ENCODE measurements at regions of chr10 and their contacts with region 1.

Region 1: GRCh38 chr10:12214763-12215218 is 18.8 kb downstream of the CDC123 start:
- DNase-seq: peak in 1 of 2 experiments; percentile 68
- H3K4me3 ChIP-seq: no peak overlapping the region
- H3K4me3 Mint-ChIP-seq: no peak overlapping the region
- H3K27ac Mint-ChIP-seq: no peak overlapping the region
- H3K4me1 ChIP-seq: no peaks in the 10 kb centered on the region
- H3K4me1 Mint-ChIP-seq: no peaks in the 10 kb centered on the region
- H3K27me3 ChIP-seq: no peaks in the 10 kb centered on the region
- H3K27me3 Mint-ChIP-seq: no peaks in the 10 kb centered on the region
- CTCF ChIP-seq: peak; percentile 79 to 84

Region 2: DNA sequence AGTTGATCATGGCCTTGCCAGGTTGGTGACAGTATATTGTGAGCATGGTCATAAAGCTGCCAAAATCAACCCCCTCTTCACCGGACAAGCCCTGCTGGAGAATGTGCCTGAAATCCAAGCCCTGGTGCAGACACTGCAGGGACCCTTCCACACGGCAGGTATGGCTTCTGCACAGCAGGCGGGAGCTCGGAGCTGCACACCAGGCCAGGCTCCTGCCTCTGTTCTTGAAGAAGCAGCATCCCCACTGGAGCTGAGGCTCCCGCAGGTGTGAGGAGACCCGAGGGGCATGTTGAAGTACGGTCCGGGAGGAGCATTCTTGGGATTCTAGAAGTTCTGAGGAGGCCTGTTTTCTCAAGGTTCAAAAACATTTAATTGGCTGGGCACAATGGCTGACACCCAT is 133.3 kb before region 1 on chr10:
- CTCF ChIA-PET with region 1: no interaction called
- POLR2A ChIA-PET with region 1: interaction called, 11 read pairs
- intact Hi-C with region 1: no loop called
- DNase-seq: no peak
- H3K4me3 ChIP-seq: no peak overlapping the region
- H3K4me3 Mint-ChIP-seq: no peak overlapping the region
- H3K27ac Mint-ChIP-seq: no peak overlapping the region
- H3K4me1 ChIP-seq: no peaks in the 10 kb centered on the region
- H3K4me1 Mint-ChIP-seq: no peaks in the 10 kb centered on the region
- H3K27me3 ChIP-seq: no peaks in the 10 kb centered on the region
- H3K27me3 Mint-ChIP-seq: no peaks in the 10 kb centered on the region
- CTCF ChIP-seq: no peak

Region 3: GRCh38 chr10:14200698-14201544 is 1986.1 kb after region 1 on chr10:
- CTCF ChIA-PET with region 1: no interaction called
- POLR2A ChIA-PET with region 1: no interaction called
- intact Hi-C with region 1: no loop called
- DNase-seq: peak in 1 of 2 experiments; percentile 49
- H3K4me3 ChIP-seq: no peak overlapping the region
- H3K4me3 Mint-ChIP-seq: no peak overlapping the region
- H3K27ac Mint-ChIP-seq: no peak overlapping the region
- H3K4me1 ChIP-seq: no peaks in the 10 kb centered on the region
- H3K4me1 Mint-ChIP-seq: peaks cover 4% of the 10 kb centered on the region
- H3K27me3 ChIP-seq: no peaks in the 10 kb centered on the region
- H3K27me3 Mint-ChIP-seq: peaks cover 3% of the 10 kb centered on the region
- CTCF ChIP-seq: peak; percentile 41 to 57

Measured in Caco-2 (cell line).